Gastrocnemius medialis (tissue), 4 donors: ENCODE measurements at regions of chr7 and their contacts with region 1.

Region 1: DNA sequence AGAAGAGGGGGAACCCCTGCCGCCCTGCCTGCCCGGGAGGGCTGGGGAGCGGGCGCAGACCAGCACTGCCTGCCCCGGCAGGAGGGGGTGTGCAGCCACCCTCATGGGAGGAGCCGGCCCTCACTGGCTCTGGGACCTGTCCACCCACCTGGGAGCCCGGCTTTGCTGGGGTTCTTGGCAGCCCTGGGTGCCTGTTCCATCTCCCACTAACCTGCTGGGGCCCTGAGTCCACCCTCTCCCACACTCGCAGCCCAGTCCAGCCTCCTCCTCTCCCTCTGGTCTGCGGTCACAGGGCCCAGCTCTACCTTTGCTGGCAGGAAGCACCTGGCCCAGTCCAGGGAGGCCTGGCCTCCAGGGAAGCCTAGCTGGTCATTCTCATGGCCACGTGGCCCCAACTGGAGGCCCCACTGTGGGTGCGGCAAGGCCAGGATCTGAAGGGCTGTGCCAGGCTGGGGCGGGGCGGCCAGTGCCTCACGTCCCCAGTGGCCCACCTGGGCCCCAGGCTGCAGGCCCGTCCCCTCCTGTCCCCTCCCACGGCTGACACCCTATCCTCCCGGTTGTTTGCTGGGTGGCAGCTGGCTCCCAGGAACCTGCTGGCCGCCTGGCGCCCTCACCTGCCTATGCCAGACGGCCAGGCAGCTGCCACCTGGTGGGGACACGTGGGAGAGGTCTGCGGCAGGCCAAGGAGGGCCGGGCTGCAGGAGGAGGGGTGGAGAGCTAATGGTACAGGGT is at the start of gene TMEM184A:
- DNase-seq: peak; percentile 78 to 90
- ATAC-seq: peak; percentile 70 to 79
- H3K4me3 ChIP-seq: peak within 1 kb of the TSS in 1 of 4 donors; percentile 10
- H3K27ac ChIP-seq: peak within 1 kb of the TSS; percentile 75 to 90 (median 84)
- H3K4me1 ChIP-seq: peaks cover 12 to 17% of the 10 kb centered on the region in 2 donors
- H3K27me3 ChIP-seq: no peaks in the 10 kb centered on the region
- CTCF ChIP-seq: peak; percentile 49 to 74 (median 67)
- POLR2A ChIP-seq: no peak
- total RNA-seq, gene TMEM184A: 0.55 to 3.3 (median 1.3) TPM

Region 2: GRCh38 chr7:1537535-1538412 is 18.2 kb before region 1 on chr7:
- in situ Hi-C with region 1: no loop called
- intact Hi-C with region 1: loop called (anchors 2 kb)
- DNase-seq: peak; percentile 67 to 84
- ATAC-seq: peak; percentile 24 to 34
- H3K4me3 ChIP-seq: peak overlapping the region; percentile 58 to 75 (median 64)
- H3K27ac ChIP-seq: peak overlapping the region; percentile 98 to 100 (median 99)
- H3K4me1 ChIP-seq: peaks cover 52 to 56% of the 10 kb centered on the region in 2 donors
- H3K27me3 ChIP-seq: no peaks in the 10 kb centered on the region
- CTCF ChIP-seq: peak in 1 of 5 experiments; percentile 12
- POLR2A ChIP-seq: peak in 1 of 2 donors; percentile 52

Region 3: DNA sequence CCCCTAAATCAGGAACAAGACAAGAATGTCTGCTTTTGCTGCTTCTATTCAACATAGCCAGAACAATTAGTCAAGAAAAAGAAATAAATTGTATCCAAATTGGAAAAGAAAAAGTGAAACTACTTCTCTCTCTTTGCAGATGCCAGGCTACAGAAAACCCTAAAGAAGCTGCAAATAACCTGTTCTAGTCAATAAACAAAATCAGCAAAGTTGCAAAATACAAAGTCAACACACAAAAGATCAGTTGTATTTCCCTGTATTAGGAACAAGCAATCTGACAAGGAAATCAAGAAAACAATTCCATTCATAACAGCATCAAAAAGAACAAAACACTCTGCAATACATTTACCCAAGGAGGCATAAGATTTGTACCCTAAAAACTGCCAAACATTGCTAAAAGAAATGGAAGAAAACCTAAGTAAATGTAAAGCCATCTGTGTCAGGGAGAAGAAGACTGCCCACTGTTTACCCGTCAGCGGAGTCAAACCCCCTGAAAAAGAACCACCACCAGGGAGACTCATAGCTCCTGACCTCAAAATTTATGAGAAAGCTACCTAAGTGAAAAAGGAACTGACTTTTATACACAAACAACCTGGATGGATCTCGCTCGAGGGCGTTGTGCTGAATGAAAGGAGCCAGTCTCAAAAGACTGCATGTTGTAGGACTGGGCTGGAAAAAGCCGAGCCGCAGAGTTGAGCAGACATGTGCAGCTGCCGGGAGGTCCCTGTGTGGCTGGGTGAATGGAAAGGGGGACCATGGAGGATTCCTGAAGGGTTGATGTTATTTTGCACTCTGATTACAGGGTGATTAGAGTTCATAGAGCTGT is 413.7 kb after region 1 on chr7:
- in situ Hi-C with region 1: no loop called
- intact Hi-C with region 1: no loop called
- DNase-seq: no peak
- ATAC-seq: no peak
- H3K4me3 ChIP-seq: no peak overlapping the region
- H3K27ac ChIP-seq: no peak overlapping the region
- H3K4me1 ChIP-seq: no peaks in the 10 kb centered on the region
- H3K27me3 ChIP-seq: no peaks in the 10 kb centered on the region
- CTCF ChIP-seq: no peak
- POLR2A ChIP-seq: no peak